ENCODE measurements at regions of chr5 and their contacts with region 1.

Region 1: GRCh38 chr5:119435436-119436132 is 16.7 kb upstream of the HSD17B4 start:
- DNase-seq: peak; percentile 52
- CTCF ChIP-seq: peak; percentile 56

Region 2: GRCh38 chr5:119418531-119419116 is 17.0 kb before region 1 on chr5:
- CTCF ChIA-PET with region 1: interaction called, 34 read pairs
- POLR2A ChIA-PET with region 1: no interaction called
- DNase-seq: no peak
- CTCF ChIP-seq: no peak

Region 3: GRCh38 chr5:119451561-119451960 is 16.0 kb after region 1 on chr5:
- CTCF ChIA-PET with region 1: interaction called, 12 read pairs
- POLR2A ChIA-PET with region 1: no interaction called
- DNase-seq: no peak
- CTCF ChIP-seq: no peak